A549 (cell line): ENCODE measurements at regions of chr12 and their contacts with region 1.

Region 1: GRCh38 chr12:108967869-108968540 is 52.9 kb downstream of the SVOP start:
- DNase-seq: peak; percentile 51 to 56
- ATAC-seq: peak; percentile 58 to 89; a peak in 3 of 6 replicates
- H3K4me3 ChIP-seq: no peak overlapping the region
- H3K27ac ChIP-seq: no peak overlapping the region
- H3K4me1 ChIP-seq: no peaks in the 10 kb centered on the region
- CTCF ChIP-seq: peak; percentile 50
- EP300 ChIP-seq: no peak
- POLR2A ChIP-seq: no peak
- RAD21 ChIP-seq: peak; percentile 12 to 36; a peak in 2 of 5 replicates

Region 2: DNA sequence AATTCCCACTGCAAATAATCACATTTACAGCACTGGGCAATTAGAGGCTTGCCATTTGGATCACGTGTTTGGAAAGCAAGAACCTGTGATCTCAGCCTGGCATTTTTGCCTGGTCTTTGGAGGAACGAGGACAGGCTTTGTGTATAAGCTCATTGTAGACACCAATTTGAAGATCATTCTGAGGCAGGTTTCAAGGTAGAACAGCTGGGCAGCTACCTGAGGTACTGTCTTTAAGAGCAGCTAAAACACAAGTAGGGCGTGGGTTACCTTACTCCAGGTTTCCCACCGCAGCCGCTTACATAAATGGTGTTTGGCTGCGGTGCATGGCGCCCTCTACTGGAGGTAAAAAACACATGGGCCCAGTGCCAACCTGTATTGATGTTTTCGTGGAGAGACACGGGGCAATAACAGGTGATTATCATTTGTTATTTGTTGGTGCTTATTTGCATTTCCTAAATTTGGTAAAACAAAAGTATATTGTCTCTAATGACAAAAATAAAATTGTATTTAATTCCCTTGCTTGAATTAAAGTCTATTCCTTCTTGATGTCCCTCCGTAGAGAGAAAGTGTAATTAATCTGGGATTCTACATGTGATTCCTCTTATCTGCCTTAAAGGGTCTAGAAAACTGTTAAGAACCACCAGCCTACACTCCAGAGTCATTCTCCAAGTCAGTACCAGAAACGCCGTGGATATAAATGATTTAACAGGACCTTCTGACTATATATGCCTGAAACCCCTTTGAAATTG is 16.8 kb before region 1 on chr12:
- CTCF ChIA-PET with region 1: interaction called, 10 read pairs
- POLR2A ChIA-PET with region 1: no interaction called
- DNase-seq: peak; percentile 39 to 75
- ATAC-seq: peak; percentile 49 to 87; a peak in 3 of 6 replicates
- H3K4me3 ChIP-seq: no peak overlapping the region
- H3K27ac ChIP-seq: 0 out of 6 replicates have a peak overlapping the region, but pooled peaks of 1 of the 2 experiments have one; percentile 36
- H3K4me1 ChIP-seq: no peaks in the 10 kb centered on the region
- CTCF ChIP-seq: peak; percentile 92
- EP300 ChIP-seq: no peak
- POLR2A ChIP-seq: no peak
- RAD21 ChIP-seq: peak; percentile 86 to 89